ENCODE measurements at regions of chr11 and their contacts with region 1.

Region 1: DNA sequence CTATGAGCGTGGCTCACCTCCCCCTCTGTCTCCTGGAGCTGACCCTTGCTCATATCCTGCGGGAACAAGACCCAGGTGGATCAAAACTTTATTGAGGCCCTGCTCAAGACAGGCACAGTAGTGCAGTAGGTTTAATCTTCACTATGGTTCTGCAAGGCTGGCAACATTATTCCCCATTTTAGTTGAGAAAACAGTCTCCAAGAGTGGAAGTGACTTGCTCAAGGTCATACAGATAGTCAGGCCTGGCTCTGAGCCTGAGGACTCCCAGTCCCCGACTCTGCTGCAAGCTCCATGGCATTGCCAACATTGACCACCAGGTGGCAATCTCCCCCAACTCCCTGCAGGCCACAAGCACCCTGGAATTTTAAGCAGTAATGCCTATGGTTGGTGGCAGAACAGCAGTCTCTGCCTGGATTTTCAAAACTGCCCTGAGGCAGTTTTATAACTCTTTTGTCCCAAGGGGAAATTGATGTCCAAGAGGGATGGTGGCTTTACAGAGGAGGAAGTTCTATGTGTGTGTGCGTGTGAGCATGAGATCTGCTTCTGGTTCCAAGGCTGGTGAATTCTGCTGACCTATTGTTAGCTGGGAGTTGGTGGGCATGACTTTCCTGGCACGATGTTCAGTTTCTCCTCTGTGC is 34.1 kb downstream of the NEU3 start:
- DNase-seq: peak; percentile 61
- ATAC-seq: peak; percentile 87
- H3K4me3 Mint-ChIP-seq: no peak overlapping the region
- H3K27ac Mint-ChIP-seq: no peak overlapping the region
- H3K4me1 Mint-ChIP-seq: no peaks in the 10 kb centered on the region
- H3K27me3 Mint-ChIP-seq: no peaks in the 10 kb centered on the region
- CTCF ChIP-seq: peak; percentile 73

Region 2: DNA sequence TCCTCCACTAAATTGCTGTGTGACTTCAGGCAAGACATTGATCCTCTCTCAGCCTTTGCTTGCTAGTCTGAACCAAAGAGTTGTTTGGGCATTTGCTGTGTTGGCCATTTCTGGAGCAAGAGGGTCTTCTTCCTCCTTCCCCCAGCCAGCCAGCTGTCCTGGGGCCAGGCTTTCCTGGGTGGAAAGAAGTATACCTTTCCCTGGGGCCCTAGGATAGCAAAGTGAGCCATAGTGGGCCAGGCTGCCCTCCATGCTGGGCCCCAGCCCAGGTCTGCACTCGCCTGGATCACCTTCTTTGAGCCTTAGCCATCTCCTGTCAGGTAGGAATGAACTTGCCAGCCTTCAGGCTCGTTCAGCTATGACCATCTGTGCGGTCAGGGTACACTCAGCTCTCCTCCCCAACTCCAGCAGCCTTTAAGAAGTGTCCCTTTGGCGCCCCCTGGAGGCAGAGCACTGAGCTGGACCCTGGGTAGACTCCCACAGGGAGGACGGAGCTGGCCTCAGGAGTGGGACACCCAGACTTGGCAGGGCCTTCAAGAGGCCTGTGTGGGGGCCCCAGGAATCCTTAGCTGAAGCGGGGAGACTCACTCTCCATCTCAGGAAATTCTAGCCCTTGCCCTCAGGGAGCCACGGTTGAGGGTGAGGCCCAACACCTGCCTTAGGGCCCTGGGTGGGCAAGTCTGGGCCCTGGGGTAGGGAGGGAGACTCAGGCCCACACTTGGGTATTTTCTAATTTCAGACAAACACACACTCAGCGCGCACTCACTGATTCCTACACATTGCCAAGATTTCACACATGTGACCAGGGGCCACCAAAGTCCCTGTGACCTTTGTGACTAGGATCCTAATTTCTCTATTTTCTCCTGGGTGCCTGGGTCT is 182.0 kb after region 1 on chr11:
- CTCF ChIA-PET with region 1: interaction called, 12 read pairs
- POLR2A ChIA-PET with region 1: no interaction called
- intact Hi-C with region 1: loop called (anchors 1 kb)
- DNase-seq: peak; percentile 49
- ATAC-seq: peak; percentile 56
- H3K4me3 Mint-ChIP-seq: no peak overlapping the region
- H3K27ac Mint-ChIP-seq: no peak overlapping the region
- H3K4me1 Mint-ChIP-seq: no peaks in the 10 kb centered on the region
- H3K27me3 Mint-ChIP-seq: no peaks in the 10 kb centered on the region
- CTCF ChIP-seq: no peak

Measured in activated B cell treated with CpG ODN at 0.5 μM for 24 hours (primary cell).